ENCODE measurements at regions of chr1 and their contacts with region 1.

Region 1: DNA sequence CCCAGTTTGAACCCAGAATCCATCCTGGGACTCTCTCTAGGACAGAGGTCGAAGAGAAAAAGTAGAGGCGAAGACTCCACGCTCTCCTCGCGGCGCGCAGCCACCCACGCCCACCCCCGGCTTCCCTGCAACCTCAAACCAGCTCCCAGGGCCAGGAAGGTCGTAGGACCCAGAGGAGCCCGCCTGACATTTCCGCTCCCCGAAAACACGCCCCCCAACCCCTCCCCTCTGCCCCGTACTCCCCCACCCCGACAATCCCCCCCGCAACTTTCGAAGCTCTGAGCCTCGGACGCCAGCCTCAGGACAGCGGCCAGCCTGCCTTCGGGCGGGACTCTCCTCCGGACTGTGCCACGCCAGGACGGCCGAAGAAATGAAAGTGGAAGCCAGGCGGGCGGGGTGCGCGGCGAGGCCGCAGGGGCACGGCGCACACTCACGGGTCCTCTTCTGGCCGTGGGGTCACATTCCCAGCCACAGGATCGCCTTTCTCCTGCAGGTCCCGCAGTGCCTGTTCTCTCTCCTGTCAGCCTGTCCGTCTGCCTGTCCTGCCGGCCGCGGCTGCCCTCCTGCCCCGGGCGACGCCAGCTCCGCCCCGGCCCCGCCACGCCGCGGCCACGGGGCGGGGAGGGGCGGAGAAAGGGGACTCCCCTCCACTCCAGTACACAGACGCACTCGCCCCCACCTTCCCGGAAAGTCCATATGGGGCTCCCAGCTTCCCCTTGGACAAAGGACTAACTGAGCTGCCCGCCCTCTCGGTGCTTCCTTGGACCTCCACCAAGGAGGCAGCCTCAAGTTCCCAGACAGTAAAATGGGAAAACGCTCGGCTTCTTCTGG is at the start of gene MOB3C:
- DNase-seq: peak; percentile 79
- H3K4me3 Mint-ChIP-seq: peak within 1 kb of the TSS; percentile 86
- H3K27ac Mint-ChIP-seq: peak within 1 kb of the TSS; percentile 81
- H3K4me1 Mint-ChIP-seq: peaks cover 51% of the 10 kb centered on the region
- H3K27me3 Mint-ChIP-seq: no peaks in the 10 kb centered on the region
- total RNA-seq, gene MOB3C: 8.2 to 10.0 TPM

Region 2: GRCh38 chr1:46667782-46668760 is 51.6 kb after region 1 on chr1 and contains the start of gene ATPAF1:
- CTCF ChIA-PET with region 1: interaction called, 3 read pairs
- POLR2A ChIA-PET with region 1: interaction called, 6 read pairs
- intact Hi-C with region 1: loop called (anchors 5 kb)
- DNase-seq: peak; percentile 85
- H3K4me3 Mint-ChIP-seq: no peak within 1 kb of the TSS
- H3K27ac Mint-ChIP-seq: peak within 1 kb of the TSS; percentile 36
- H3K4me1 Mint-ChIP-seq: peaks cover 16% of the 10 kb centered on the region
- H3K27me3 Mint-ChIP-seq: no peaks in the 10 kb centered on the region
- total RNA-seq, gene ATPAF1: 45.0 to 45.9 TPM

Region 3: DNA sequence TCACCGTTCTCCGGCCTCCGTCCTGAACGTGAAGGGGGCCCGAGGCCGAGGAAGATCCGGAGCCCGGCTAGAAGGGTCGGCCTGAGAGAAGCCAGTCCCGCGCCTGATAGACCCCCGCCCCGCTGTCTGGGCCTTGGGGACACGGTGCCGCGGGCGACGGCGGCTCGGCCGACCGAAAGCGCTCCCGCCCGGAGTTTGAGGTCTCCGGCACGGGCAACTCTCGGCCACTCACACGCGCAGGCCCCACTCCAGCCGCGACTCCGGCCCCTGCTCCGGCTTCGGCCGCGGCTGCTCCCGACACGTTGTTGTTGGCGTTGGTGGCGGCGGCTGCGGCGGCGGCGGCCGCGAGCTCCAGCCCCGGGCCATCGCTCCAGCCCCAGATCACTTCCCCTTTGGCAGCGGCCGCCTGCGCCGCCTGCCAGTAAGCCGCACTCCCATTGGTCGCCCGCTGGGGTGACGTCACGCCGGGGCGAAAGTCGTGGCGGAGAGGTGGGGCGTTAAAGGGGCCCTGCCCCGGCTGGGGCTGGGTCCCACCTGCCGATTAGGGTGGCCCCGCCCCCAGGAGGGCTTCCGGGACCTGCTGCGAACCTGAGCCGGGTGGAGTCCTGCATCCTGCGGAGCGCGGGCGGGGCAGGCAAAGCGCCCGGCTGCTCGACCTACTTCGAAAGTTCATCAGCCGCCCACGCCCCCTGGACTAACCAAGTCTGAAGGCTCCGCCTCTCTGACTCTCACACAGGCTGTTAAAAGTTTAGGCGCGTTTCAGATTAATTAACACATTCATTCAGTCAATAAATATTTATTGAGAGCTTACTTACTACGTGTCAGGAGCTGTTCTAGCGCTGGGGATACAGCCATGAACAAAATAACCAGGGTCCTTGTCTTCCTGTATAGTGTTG is 102.5 kb after region 1 on chr1 and contains the start of gene EFCAB14:
- CTCF ChIA-PET with region 1: no interaction called
- POLR2A ChIA-PET with region 1: interaction called, 5 read pairs
- intact Hi-C with region 1: loop called (anchors 2 kb)
- DNase-seq: peak; percentile 100
- H3K4me3 Mint-ChIP-seq: peak within 1 kb of the TSS; percentile 90
- H3K27ac Mint-ChIP-seq: peak within 1 kb of the TSS; percentile 85
- H3K4me1 Mint-ChIP-seq: peaks cover 37% of the 10 kb centered on the region
- H3K27me3 Mint-ChIP-seq: no peaks in the 10 kb centered on the region
- total RNA-seq, gene EFCAB14: 47.1 to 48.0 TPM

Region 4: GRCh38 chr1:46784666-46785065 is 168.2 kb after region 1 on chr1:
- CTCF ChIA-PET with region 1: no interaction called
- POLR2A ChIA-PET with region 1: no interaction called
- intact Hi-C with region 1: no loop called
- DNase-seq: no peak
- H3K4me3 Mint-ChIP-seq: no peak overlapping the region
- H3K27ac Mint-ChIP-seq: no peak overlapping the region
- H3K4me1 Mint-ChIP-seq: peaks cover 2% of the 10 kb centered on the region
- H3K27me3 Mint-ChIP-seq: peaks cover 12% of the 10 kb centered on the region

Measured in activated CD4-positive, alpha-beta memory T cell treated with anti-CD3 and anti-CD28 coated beads for 36 hours (primary cell).